ENCODE measurements at regions of chr9 and their contacts with region 1.

Region 1: DNA sequence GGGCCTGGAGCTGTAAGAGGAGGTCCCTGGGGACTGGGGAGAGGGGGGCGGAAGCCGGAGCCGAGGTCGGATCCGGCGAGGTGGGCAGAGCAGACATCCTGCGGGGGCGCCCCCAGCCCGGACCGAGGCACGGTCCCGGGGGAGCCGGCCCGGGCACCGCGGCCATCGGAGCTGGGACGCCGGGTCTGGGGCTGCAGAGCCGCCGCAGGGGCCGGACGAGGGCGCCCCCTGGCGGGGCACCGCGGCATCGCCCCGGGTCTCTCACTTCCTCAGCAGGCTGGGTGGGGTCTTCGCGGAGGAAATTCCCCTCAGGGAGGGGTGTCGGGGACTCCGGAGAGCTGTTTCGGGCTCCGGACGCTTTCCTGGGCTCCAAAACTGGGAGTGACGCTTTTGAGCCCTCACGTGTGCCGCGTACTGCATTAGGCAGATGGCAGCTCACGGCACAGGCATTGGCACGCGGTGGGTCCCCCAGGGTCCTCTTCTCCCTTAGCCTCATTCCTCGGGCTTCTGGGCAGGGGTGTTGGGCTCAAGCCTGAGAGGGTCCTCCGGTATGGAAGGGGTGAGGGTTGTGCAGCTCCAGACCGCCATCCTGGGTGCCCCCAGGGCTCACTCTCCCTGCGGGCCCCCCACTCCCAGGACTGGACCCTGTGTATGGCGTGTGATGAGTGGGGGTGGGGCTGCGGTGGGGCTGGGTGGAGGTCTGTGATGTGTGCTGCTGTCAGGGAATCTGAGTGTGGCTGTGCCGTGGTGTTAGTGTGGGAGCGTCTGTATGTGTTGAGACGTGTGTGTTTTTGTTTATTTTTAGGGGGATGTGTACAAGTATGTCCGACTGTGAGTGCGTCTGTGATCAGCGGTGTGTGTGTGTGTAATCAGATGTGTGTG is 29.6 kb downstream of the LHX2 start:
- DNase-seq: peak; percentile 44 to 85 (median 81)
- ATAC-seq: peak; percentile 23 to 58
- H3K4me3 ChIP-seq: peak overlapping the region; percentile 50
- H3K27ac ChIP-seq: no peak overlapping the region
- H3K4me1 ChIP-seq: peaks cover 2% of the 10 kb centered on the region
- H3K27me3 ChIP-seq: no peaks in the 10 kb centered on the region

Region 2: GRCh38 chr9:123414946-123415821 is 626.0 kb before region 1 on chr9:
- intact Hi-C with region 1: loop called in 1 of 4 experiments (anchors 10 kb)
- DNase-seq: no peak
- ATAC-seq: peak in 1 of 2 donors; percentile 34
- H3K4me3 ChIP-seq: no peak overlapping the region
- H3K27ac ChIP-seq: no peak overlapping the region
- H3K4me1 ChIP-seq: no peaks in the 10 kb centered on the region
- H3K27me3 ChIP-seq: no peaks in the 10 kb centered on the region

Region 3: DNA sequence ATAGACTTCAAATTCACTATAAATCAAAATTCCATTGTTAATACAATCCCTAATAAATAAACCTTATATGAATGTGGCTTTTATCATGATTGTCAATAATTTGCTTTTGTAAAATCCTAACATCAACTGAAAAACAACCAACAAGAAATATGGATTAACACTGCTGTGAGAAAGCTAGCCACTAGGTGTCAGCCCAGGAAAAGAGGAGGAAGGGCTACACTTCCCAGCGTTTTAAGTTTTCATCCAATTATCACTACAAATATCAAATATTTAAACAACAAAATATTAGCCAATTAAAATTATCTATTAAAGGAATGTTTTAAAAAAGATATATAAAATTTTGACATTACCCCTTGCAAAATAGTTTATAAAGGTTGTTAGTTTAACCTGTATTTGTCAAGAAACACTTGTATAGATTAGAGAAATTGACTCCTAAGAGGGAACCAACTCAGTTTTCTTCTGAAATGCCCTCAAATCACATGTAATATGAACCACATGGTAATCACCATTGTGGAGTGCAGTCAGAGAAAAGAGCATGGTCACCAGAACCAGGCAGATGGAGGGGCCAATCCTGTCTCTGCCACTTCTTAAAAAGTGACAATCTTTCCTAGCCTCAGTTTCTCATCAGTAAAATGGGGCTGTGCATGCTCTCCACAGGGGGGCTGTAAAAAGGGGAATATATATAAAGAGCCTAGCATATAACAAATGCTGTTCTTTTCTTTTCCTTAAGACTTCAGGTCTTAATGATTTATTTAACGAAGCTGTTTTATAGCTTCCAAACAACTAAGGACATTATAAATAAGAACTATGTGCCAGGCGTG is 497.0 kb before region 1 on chr9:
- intact Hi-C with region 1: loop called in 3 of 4 experiments (anchors 5 kb)
- DNase-seq: no peak
- ATAC-seq: no peak
- H3K4me3 ChIP-seq: no peak overlapping the region
- H3K27ac ChIP-seq: no peak overlapping the region
- H3K4me1 ChIP-seq: peaks cover 4% of the 10 kb centered on the region
- H3K27me3 ChIP-seq: no peaks in the 10 kb centered on the region

Region 4: GRCh38 chr9:123710299-123710698 is 330.9 kb before region 1 on chr9:
- intact Hi-C with region 1: loop called in 1 of 4 experiments (anchors 10 kb)
- DNase-seq: no peak
- ATAC-seq: no peak
- H3K4me3 ChIP-seq: no peak overlapping the region
- H3K27ac ChIP-seq: no peak overlapping the region
- H3K4me1 ChIP-seq: no peaks in the 10 kb centered on the region
- H3K27me3 ChIP-seq: no peaks in the 10 kb centered on the region

Region 5: GRCh38 chr9:124022201-124023121 is 18.7 kb before region 1 on chr9:
- intact Hi-C with region 1: no loop called
- DNase-seq: no peak
- ATAC-seq: peak in 1 of 2 donors; percentile 17
- H3K4me3 ChIP-seq: no peak overlapping the region
- H3K27ac ChIP-seq: no peak overlapping the region
- H3K4me1 ChIP-seq: no peaks in the 10 kb centered on the region
- H3K27me3 ChIP-seq: no peaks in the 10 kb centered on the region

Region 6: GRCh38 chr9:124267271-124267807 is 226.2 kb after region 1 on chr9:
- intact Hi-C with region 1: no loop called
- DNase-seq: peak in 1 of 3 donors; percentile 69
- ATAC-seq: peak; percentile 30 to 44
- H3K4me3 ChIP-seq: no peak overlapping the region
- H3K27ac ChIP-seq: no peak overlapping the region
- H3K4me1 ChIP-seq: peaks cover 27% of the 10 kb centered on the region
- H3K27me3 ChIP-seq: no peaks in the 10 kb centered on the region

Region 7: GRCh38 chr9:124532897-124533296 is 491.7 kb after region 1 on chr9:
- intact Hi-C with region 1: no loop called
- DNase-seq: no peak
- ATAC-seq: no peak
- H3K4me3 ChIP-seq: no peak overlapping the region
- H3K27ac ChIP-seq: no peak overlapping the region
- H3K4me1 ChIP-seq: no peaks in the 10 kb centered on the region
- H3K27me3 ChIP-seq: no peaks in the 10 kb centered on the region

Region 8: GRCh38 chr9:124684169-124684568 is 643.0 kb after region 1 on chr9:
- intact Hi-C with region 1: no loop called
- DNase-seq: no peak
- ATAC-seq: peak; percentile 78 to 92
- H3K4me3 ChIP-seq: no peak overlapping the region
- H3K27ac ChIP-seq: no peak overlapping the region
- H3K4me1 ChIP-seq: no peaks in the 10 kb centered on the region
- H3K27me3 ChIP-seq: no peaks in the 10 kb centered on the region